ENCODE measurements at regions of chr13 and their contacts with region 1.

Region 1: GRCh38 chr13:44435142-44435982 is 61.7 kb downstream of the SERP2 start:
- DNase-seq: peak; percentile 96
- ATAC-seq: peak; percentile 76
- H3K4me3 ChIP-seq: peak overlapping the region; percentile 71 to 97 (median 79)
- H3K27ac ChIP-seq: peak overlapping the region; percentile 96
- H3K4me1 ChIP-seq: peaks cover 39% of the 10 kb centered on the region
- H3K27me3 ChIP-seq: no peaks in the 10 kb centered on the region; a peak in 1 of 5 replicates
- CTCF ChIP-seq: no peak
- EP300 ChIP-seq: peak in 1 of 2 experiments; percentile 87; a peak in 2 of 4 replicates
- POLR2A ChIP-seq: peak; percentile 15 to 55; a peak in 2 of 4 replicates
- RAD21 ChIP-seq: no peak

Region 2: DNA sequence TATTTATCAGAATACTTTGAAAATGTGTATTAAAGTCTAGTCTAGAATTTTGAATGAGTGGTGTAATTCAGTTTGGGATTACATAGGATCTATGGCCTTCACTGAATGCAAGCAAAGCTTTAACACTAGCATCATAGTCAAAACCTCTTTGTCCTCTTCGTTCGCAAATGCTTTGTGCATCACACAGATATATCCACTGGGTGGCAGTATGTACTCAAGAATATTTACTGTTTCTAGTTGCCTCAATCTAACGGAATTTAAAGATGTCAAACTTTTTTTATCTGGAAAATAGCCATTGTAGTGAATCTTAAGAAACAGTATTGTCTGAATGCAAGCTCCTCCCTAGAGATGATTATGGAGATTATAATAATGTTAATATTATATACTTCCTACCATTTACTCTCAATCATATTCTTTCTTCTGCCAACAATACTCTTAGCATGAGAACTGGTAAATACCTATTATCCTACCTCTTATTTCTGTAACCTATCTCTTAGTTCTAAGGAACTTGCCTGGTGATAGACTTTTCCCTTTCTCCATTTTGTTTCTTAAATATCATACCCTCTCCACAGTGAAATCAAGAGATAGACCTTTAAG is 529.8 kb before region 1 on chr13:
- CTCF ChIA-PET with region 1: interaction called, 12 read pairs
- POLR2A ChIA-PET with region 1: no interaction called
- in situ Hi-C with region 1: loop called (anchors 5 kb)
- intact Hi-C with region 1: no loop called
- DNase-seq: peak; percentile 55
- ATAC-seq: peak; percentile 57
- H3K4me3 ChIP-seq: no peak overlapping the region
- H3K27ac ChIP-seq: no peak overlapping the region
- H3K4me1 ChIP-seq: no peaks in the 10 kb centered on the region
- H3K27me3 ChIP-seq: no peaks in the 10 kb centered on the region
- CTCF ChIP-seq: peak; percentile 72
- EP300 ChIP-seq: no peak
- POLR2A ChIP-seq: no peak
- RAD21 ChIP-seq: 0 out of 2 replicates have a peak, but pooled peaks have one; percentile 57

Region 3: DNA sequence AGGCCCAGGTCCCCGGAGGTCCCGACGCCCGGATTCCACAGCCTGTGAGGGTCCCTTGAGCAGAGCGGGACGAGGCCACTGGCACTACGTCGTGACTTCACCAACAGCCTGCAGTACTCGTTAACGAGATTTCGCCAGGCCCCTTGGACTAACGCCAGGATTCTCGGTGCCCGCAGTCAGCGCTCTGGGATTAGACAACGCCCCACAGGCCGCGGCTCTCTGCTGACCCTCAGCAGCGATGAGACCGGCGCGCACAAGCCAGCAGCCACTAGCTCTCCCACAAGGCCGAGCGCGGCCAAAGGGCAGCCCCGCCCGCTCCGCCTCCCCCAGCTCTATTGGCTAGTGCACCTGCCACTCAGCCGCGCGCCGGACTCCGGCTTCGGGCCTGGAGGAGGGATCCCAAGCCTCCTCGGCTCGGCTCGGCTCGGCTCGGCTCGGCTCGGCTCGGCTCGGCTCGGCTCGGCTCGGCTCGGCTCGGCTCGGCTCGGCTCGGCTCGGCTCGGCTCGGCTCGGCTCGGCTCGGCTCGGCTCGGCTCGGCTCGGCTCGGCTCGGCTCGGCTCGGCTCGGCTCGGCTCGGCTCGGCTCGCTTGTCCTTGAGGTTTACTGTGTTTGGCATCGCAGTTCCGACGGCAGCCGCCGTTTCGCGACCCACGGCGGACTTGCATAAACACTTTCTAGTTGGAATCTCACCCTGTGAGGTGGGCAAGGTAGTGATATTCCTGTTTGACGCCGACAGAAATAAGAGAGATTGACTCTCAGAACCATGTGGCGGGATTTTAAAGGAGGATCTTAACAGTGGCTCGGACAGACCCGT is 293.4 kb before region 1 on chr13:
- CTCF ChIA-PET with region 1: no interaction called
- POLR2A ChIA-PET with region 1: interaction called, 17 read pairs
- in situ Hi-C with region 1: no loop called
- intact Hi-C with region 1: loop called (anchors 1 kb)
- DNase-seq: peak; percentile 89
- ATAC-seq: peak; percentile 100
- H3K4me3 ChIP-seq: peak overlapping the region; percentile 40 to 73 (median 57)
- H3K27ac ChIP-seq: peak overlapping the region; percentile 82
- H3K4me1 ChIP-seq: peaks cover 26% of the 10 kb centered on the region
- H3K27me3 ChIP-seq: no peaks in the 10 kb centered on the region
- CTCF ChIP-seq: peak; percentile 25; the same call in 1 of the 2 replicates
- EP300 ChIP-seq: no peak
- POLR2A ChIP-seq: peak; percentile 75 to 92
- RAD21 ChIP-seq: peak; percentile 57; the same call in 1 of the 2 replicates

Region 4: DNA sequence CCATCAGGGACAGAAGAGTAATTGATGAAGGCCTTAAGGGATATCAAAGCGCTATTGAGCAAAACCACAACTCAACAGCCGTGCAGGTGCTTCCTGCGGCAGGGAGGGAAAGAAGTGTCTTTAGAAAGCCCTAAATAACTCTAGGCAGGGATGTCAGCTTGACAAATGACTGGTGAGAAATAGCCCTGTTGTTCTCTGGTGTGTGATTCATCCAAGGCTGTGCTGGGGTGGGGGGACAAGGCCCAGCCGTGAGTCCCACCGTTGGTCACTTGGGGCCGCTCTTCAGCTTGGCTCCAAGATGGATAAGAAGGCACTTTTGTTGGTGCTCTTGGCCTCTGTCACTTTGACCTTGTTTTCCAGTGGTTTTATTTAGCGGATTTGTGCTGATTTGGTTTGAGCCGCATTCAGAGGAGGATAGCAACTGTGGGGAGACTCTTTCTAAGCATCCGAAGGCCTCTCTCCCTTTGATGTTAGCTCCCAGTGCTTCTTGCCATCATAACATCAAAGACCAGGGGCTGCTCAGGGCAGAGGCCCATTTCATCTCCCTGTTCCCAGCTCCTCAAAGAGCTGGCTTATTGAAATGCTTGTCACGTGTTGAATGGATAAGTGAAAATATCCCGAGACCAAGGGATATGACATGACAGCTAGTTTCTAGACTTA is 192.0 kb before region 1 on chr13:
- CTCF ChIA-PET with region 1: interaction called, 8 read pairs
- POLR2A ChIA-PET with region 1: interaction called, 6 read pairs
- in situ Hi-C with region 1: loop called (anchors 5 kb)
- intact Hi-C with region 1: loop called (anchors 1 kb)
- DNase-seq: peak; percentile 54
- ATAC-seq: peak; percentile 98
- H3K4me3 ChIP-seq: no peak overlapping the region
- H3K27ac ChIP-seq: no peak overlapping the region
- H3K4me1 ChIP-seq: no peaks in the 10 kb centered on the region
- H3K27me3 ChIP-seq: peaks cover 0 to 6% of the 10 kb centered on the region in 2 experiments; a peak in 1 of 5 replicates
- CTCF ChIP-seq: peak; percentile 74
- EP300 ChIP-seq: no peak
- POLR2A ChIP-seq: no peak
- RAD21 ChIP-seq: peak; percentile 66

Region 5: GRCh38 chr13:44403461-44404056 is 31.8 kb before region 1 on chr13:
- CTCF ChIA-PET with region 1: no interaction called
- POLR2A ChIA-PET with region 1: interaction called, 96 read pairs
- in situ Hi-C with region 1: no loop called
- intact Hi-C with region 1: loop called (anchors 1 kb)
- DNase-seq: no peak
- ATAC-seq: 0 out of 3 replicates have a peak, but pooled peaks have one; percentile 1
- H3K4me3 ChIP-seq: 0 out of 6 replicates have a peak overlapping the region, but pooled peaks of 1 of the 3 experiments have one; percentile 30
- H3K27ac ChIP-seq: peak overlapping the region; percentile 97
- H3K4me1 ChIP-seq: peaks cover 38% of the 10 kb centered on the region
- H3K27me3 ChIP-seq: no peaks in the 10 kb centered on the region; a peak in 1 of 5 replicates
- CTCF ChIP-seq: no peak
- EP300 ChIP-seq: no peak
- POLR2A ChIP-seq: no peak
- RAD21 ChIP-seq: no peak

Region 6: DNA sequence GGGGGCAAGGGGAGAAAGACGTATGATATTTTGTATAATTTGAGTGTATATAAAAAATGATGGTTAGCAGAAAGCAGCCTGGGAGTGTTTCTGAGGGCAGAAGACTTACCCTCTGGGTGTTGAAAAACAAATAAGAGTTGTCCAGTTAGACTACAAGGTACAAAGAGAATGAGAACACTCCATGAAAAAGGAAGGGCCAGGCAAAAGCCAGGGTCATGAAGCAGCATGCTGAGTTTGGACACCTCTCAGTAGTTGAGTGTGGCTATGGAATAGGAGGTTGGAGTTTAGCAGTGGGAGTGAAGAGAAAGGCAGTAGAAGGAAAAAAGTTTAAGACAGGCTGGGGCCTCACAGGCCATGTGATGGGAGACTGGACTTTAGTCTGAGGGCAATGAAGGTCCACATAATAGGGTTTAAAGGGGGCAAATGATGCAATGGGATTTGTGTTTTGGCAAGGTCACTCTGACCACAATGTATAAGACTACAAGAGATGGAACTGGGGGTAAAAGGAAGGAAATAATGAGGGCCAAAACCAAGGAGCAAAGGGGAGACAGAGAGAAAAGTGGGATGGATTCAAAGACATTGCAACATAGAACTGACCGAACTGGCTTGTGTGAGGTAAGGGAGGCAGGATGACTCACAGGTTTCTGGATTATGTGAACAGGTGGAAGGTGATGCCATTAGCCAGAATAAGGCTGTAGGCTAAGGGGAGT is 14.8 kb after region 1 on chr13:
- CTCF ChIA-PET with region 1: no interaction called
- POLR2A ChIA-PET with region 1: interaction called, 36 read pairs
- in situ Hi-C with region 1: no loop called
- intact Hi-C with region 1: no loop called
- DNase-seq: peak; percentile 42
- ATAC-seq: peak; percentile 75
- H3K4me3 ChIP-seq: no peak overlapping the region
- H3K27ac ChIP-seq: peak overlapping the region; percentile 76
- H3K4me1 ChIP-seq: peaks cover 40% of the 10 kb centered on the region
- H3K27me3 ChIP-seq: no peaks in the 10 kb centered on the region
- CTCF ChIP-seq: no peak
- EP300 ChIP-seq: peak in 1 of 2 experiments; percentile 56; a peak in 2 of 4 replicates
- POLR2A ChIP-seq: no peak
- RAD21 ChIP-seq: no peak

Region 7: GRCh38 chr13:44508562-44509077 is 73.3 kb after region 1 on chr13:
- CTCF ChIA-PET with region 1: no interaction called
- POLR2A ChIA-PET with region 1: no interaction called
- in situ Hi-C with region 1: no loop called
- intact Hi-C with region 1: no loop called
- DNase-seq: no peak
- ATAC-seq: no peak
- H3K4me3 ChIP-seq: no peak overlapping the region
- H3K27ac ChIP-seq: no peak overlapping the region
- H3K4me1 ChIP-seq: peaks cover 8% of the 10 kb centered on the region
- H3K27me3 ChIP-seq: no peaks in the 10 kb centered on the region
- CTCF ChIP-seq: no peak
- EP300 ChIP-seq: no peak
- POLR2A ChIP-seq: no peak
- RAD21 ChIP-seq: no peak